ENCODE measurements at regions of chr1 and their contacts with region 1.

Region 1: GRCh38 chr1:25796811-25797458 is 3.1 kb upstream of the SELENON start:
- DNase-seq: peak; percentile 78 to 91 (median 84)
- ATAC-seq: peak; percentile 20 to 48 (median 38)
- H3K4me3 ChIP-seq: no peak overlapping the region
- H3K27ac ChIP-seq: peak overlapping the region in 7 of 12 donors; percentile 22 to 69 (median 41)
- H3K4me1 ChIP-seq: peaks cover 3 to 48% (median 32%) of the 10 kb centered on the region in 12 donors
- H3K27me3 ChIP-seq: no peaks in the 10 kb centered on the region
- CTCF ChIP-seq: peak; percentile 76 to 85 (median 78)
- POLR2A ChIP-seq: no peak

Region 2: GRCh38 chr1:25338188-25338981 is 458.6 kb before region 1 on chr1 and contains the start of gene TMEM50A:
- intact Hi-C with region 1: no loop called
- DNase-seq: peak; percentile 91 to 96 (median 92)
- ATAC-seq: peak; percentile 96 to 98 (median 98)
- H3K4me3 ChIP-seq: peak within 1 kb of the TSS; percentile 59 to 99 (median 93)
- H3K27ac ChIP-seq: peak within 1 kb of the TSS; percentile 93 to 99 (median 97)
- H3K4me1 ChIP-seq: peaks cover 0 to 35% (median 24%) of the 10 kb centered on the region in 12 donors
- H3K27me3 ChIP-seq: no peaks in the 10 kb centered on the region
- CTCF ChIP-seq: peak in 1 of 12 donors; percentile 5
- POLR2A ChIP-seq: peak in 1 of 2 donors; percentile 88
- total RNA-seq, gene TMEM50A: 53.5 to 112 (median 94.5) TPM

Region 3: GRCh38 chr1:25430666-25431505 is 366.0 kb before region 1 on chr1 and contains the start of gene MACO1:
- intact Hi-C with region 1: loop called in 2 of 10 experiments (anchors 10 kb)
- DNase-seq: peak; percentile 97 to 98 (median 97)
- ATAC-seq: peak; percentile 96 to 98 (median 97)
- H3K4me3 ChIP-seq: peak within 1 kb of the TSS; percentile 82 to 99 (median 92)
- H3K27ac ChIP-seq: peak within 1 kb of the TSS; percentile 78 to 97 (median 94)
- H3K4me1 ChIP-seq: peaks cover 3 to 49% (median 42%) of the 10 kb centered on the region in 12 donors
- H3K27me3 ChIP-seq: no peaks in the 10 kb centered on the region
- CTCF ChIP-seq: peak in 1 of 12 donors; percentile 10
- POLR2A ChIP-seq: peak in 1 of 2 donors; percentile 34
- total RNA-seq, gene MACO1: 11.2 to 21.0 (median 14.6) TPM

Region 4: GRCh38 chr1:25608488-25609178 is 188.3 kb before region 1 on chr1:
- intact Hi-C with region 1: loop called in 8 of 10 experiments (anchors 1 to 5 kb)
- DNase-seq: peak; percentile 86 to 92 (median 88)
- ATAC-seq: peak; percentile 74 to 96 (median 90)
- H3K4me3 ChIP-seq: peak overlapping the region in 7 of 12 donors; percentile 13 to 34 (median 29)
- H3K27ac ChIP-seq: peak overlapping the region in 1 of 12 donors; percentile 32
- H3K4me1 ChIP-seq: peaks cover 0 to 11% (median 0%) of the 10 kb centered on the region in 12 donors
- H3K27me3 ChIP-seq: no peaks in the 10 kb centered on the region
- CTCF ChIP-seq: peak; percentile 58 to 90 (median 79)
- POLR2A ChIP-seq: no peak

Region 5: GRCh38 chr1:25695090-25695770 is 101.7 kb before region 1 on chr1:
- intact Hi-C with region 1: loop called in 4 of 10 experiments (anchors 5 kb)
- DNase-seq: peak; percentile 75 to 89 (median 77)
- ATAC-seq: peak; percentile 73 to 87 (median 82)
- H3K4me3 ChIP-seq: no peak overlapping the region
- H3K27ac ChIP-seq: peak overlapping the region; percentile 61 to 99 (median 86)
- H3K4me1 ChIP-seq: peaks cover 6 to 81% (median 51%) of the 10 kb centered on the region in 12 donors
- H3K27me3 ChIP-seq: no peaks in the 10 kb centered on the region
- CTCF ChIP-seq: peak in 8 of 12 donors; percentile 13 to 51 (median 29)
- POLR2A ChIP-seq: no peak

Measured in heart left ventricle (tissue), 16 donors.